Aorta (tissue), 5 donors: ENCODE measurements at regions of chr13 and their contacts with region 1.

Region 1: GRCh38 chr13:99585609-99586008 is 84.3 kb downstream of the TM9SF2 start:
- DNase-seq: no peak
- ATAC-seq: peak; percentile 68
- H3K4me3 ChIP-seq: no peak overlapping the region
- H3K27ac ChIP-seq: no peak overlapping the region
- H3K4me1 ChIP-seq: no peaks in the 10 kb centered on the region
- H3K27me3 ChIP-seq: no peaks in the 10 kb centered on the region

Region 2: DNA sequence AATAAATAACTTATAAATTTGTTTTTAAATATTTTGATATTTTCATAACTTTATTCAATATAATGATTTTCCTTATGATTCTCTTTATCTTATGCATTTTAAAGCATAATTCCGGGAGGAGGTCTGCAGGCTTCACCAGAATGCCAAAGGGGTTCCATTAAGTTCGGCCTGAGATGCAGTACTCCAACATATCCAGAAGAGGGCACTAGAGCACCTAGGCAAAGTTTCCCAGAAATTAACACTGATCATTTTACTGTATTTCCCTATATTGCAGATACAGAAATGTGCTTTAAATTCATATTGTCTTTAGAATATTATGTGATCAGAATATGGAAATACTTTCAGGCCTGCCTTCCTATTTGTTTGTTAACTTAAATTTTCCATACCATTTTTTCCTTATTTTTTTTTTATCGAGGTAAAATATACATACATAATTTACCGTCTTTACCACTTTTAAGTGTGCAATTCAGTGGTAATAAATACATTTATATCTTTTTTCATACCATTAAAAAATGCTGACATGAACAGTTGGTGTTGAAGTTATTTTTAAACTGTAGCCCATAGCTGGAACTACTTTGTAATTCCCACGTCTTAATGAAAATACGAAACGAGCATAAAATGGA is 143.2 kb before region 1 on chr13:
- intact Hi-C with region 1: no loop called
- DNase-seq: no peak
- ATAC-seq: peak; percentile 84
- H3K4me3 ChIP-seq: no peak overlapping the region
- H3K27ac ChIP-seq: no peak overlapping the region
- H3K4me1 ChIP-seq: no peaks in the 10 kb centered on the region
- H3K27me3 ChIP-seq: no peaks in the 10 kb centered on the region

Region 3: GRCh38 chr13:100674848-100675660 is 1089.4 kb after region 1 on chr13:
- intact Hi-C with region 1: loop called in 1 of 2 experiments (anchors 5 kb)
- DNase-seq: peak; percentile 100
- ATAC-seq: peak; percentile 98
- H3K4me3 ChIP-seq: peak overlapping the region; percentile 82 to 100
- H3K27ac ChIP-seq: peak overlapping the region in 1 of 2 donors; percentile 65
- H3K4me1 ChIP-seq: no peaks in the 10 kb centered on the region
- H3K27me3 ChIP-seq: no peaks in the 10 kb centered on the region